Activated CD8-positive, alpha-beta T cell treated with anti-CD3 and anti-CD28 coated beads, Interleukin-2, amount 10 ng/mL, durations not matched to agents 7 days and 5 days (primary cell): ENCODE measurements at regions of chr2 and their contacts with region 1.

Region 1: GRCh38 chr2:219199470-219200211 is 6.9 kb upstream of the ZFAND2B start:
- DNase-seq: no peak
- ATAC-seq: peak; percentile 33
- H3K4me3 Mint-ChIP-seq: peak overlapping the region; percentile 34
- H3K27ac Mint-ChIP-seq: peak overlapping the region; percentile 76
- H3K4me1 Mint-ChIP-seq: peaks cover 20% of the 10 kb centered on the region
- H3K27me3 Mint-ChIP-seq: no peaks in the 10 kb centered on the region

Region 2: DNA sequence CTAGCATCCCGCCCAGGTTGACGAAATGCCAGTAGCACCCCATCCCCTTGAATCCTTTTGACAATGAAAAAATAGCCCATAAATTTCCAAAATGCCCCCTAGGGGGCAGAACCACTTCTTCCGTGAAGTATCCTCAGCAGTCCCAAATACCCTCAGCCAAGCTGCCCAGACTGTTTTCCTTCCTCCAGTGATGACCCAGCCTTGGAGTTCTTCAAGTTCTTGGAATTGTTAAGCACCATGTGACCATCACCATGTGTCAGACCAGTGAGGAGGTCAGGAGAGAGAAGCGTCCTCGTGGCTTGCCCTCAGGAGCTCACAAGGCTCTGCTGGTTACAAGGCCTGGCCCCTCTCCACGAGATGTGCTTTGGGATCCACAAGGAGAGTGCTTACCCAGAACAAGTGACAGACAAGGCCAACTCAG is 28.4 kb before region 1 on chr2:
- CTCF ChIA-PET with region 1: interaction called, 10 read pairs
- POLR2A ChIA-PET with region 1: interaction called, 16 read pairs
- DNase-seq: peak; percentile 54
- ATAC-seq: peak; percentile 50
- H3K4me3 Mint-ChIP-seq: no peak overlapping the region
- H3K27ac Mint-ChIP-seq: no peak overlapping the region
- H3K4me1 Mint-ChIP-seq: peaks cover 30% of the 10 kb centered on the region
- H3K27me3 Mint-ChIP-seq: no peaks in the 10 kb centered on the region

Region 3: GRCh38 chr2:219177552-219178376 is 21.9 kb before region 1 on chr2 and contains the start of gene RETREG2:
- CTCF ChIA-PET with region 1: interaction called, 12 read pairs
- POLR2A ChIA-PET with region 1: interaction called, 27 read pairs
- DNase-seq: peak; percentile 82
- ATAC-seq: peak; percentile 55
- H3K4me3 Mint-ChIP-seq: peak within 1 kb of the TSS; percentile 92
- H3K27ac Mint-ChIP-seq: peak within 1 kb of the TSS; percentile 95
- H3K4me1 Mint-ChIP-seq: peaks cover 61% of the 10 kb centered on the region
- H3K27me3 Mint-ChIP-seq: no peaks in the 10 kb centered on the region
- total RNA-seq, gene RETREG2: 104 to 111 TPM

Region 4: GRCh38 chr2:219186754-219187456 is 12.7 kb before region 1 on chr2:
- CTCF ChIA-PET with region 1: interaction called, 12 read pairs
- POLR2A ChIA-PET with region 1: interaction called, 27 read pairs
- DNase-seq: no peak
- ATAC-seq: no peak
- H3K4me3 Mint-ChIP-seq: no peak overlapping the region
- H3K27ac Mint-ChIP-seq: no peak overlapping the region
- H3K4me1 Mint-ChIP-seq: peaks cover 31% of the 10 kb centered on the region
- H3K27me3 Mint-ChIP-seq: no peaks in the 10 kb centered on the region

Region 5: GRCh38 chr2:219285894-219286425 is 86.3 kb after region 1 on chr2:
- CTCF ChIA-PET with region 1: no interaction called
- POLR2A ChIA-PET with region 1: no interaction called
- DNase-seq: no peak
- ATAC-seq: no peak
- H3K4me3 Mint-ChIP-seq: no peak overlapping the region
- H3K27ac Mint-ChIP-seq: no peak overlapping the region
- H3K4me1 Mint-ChIP-seq: peaks cover 12% of the 10 kb centered on the region
- H3K27me3 Mint-ChIP-seq: no peaks in the 10 kb centered on the region

Region 6: GRCh38 chr2:219395609-219396008 is 196.0 kb after region 1 on chr2:
- CTCF ChIA-PET with region 1: no interaction called
- POLR2A ChIA-PET with region 1: no interaction called
- DNase-seq: no peak
- ATAC-seq: no peak
- H3K4me3 Mint-ChIP-seq: no peak overlapping the region
- H3K27ac Mint-ChIP-seq: no peak overlapping the region
- H3K4me1 Mint-ChIP-seq: peaks cover 7% of the 10 kb centered on the region
- H3K27me3 Mint-ChIP-seq: peaks cover 10% of the 10 kb centered on the region